Astrocyte of the cerebellum (primary cell): ENCODE measurements at regions of chr3 and their contacts with region 1.

Region 1: GRCh38 chr3:124768812-124769211 is 38.6 kb downstream of the UMPS start:
- DNase-seq: no peak
- H3K4me3 ChIP-seq: no peak overlapping the region
- CTCF ChIP-seq: peak; percentile 23

Region 2: GRCh38 chr3:124520970-124521369 is 247.8 kb before region 1 on chr3:
- in situ Hi-C with region 1: no loop called
- DNase-seq: no peak
- H3K4me3 ChIP-seq: no peak overlapping the region
- CTCF ChIP-seq: no peak

Region 3: DNA sequence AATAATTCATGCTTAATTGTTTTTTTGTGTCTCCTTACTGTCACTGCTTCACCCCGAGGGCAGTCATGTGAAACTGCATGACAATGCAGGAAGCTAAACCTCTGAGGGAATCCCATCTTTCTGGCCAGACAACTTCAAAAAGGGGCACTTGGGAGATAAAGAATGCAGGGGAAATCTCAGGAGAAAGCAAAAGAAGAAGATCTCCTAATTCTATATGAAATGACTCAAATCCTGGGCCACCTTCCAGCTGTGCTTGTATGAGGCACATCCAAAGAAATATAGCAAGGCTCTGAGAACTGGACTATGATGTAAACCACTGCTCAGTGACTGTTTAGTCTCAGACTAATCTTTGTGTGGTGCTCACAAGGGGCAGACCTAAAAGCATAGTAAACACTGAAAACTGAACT is 61.2 kb before region 1 on chr3:
- in situ Hi-C with region 1: no loop called
- DNase-seq: peak; percentile 59
- H3K4me3 ChIP-seq: no peak overlapping the region
- CTCF ChIP-seq: no peak

Region 4: DNA sequence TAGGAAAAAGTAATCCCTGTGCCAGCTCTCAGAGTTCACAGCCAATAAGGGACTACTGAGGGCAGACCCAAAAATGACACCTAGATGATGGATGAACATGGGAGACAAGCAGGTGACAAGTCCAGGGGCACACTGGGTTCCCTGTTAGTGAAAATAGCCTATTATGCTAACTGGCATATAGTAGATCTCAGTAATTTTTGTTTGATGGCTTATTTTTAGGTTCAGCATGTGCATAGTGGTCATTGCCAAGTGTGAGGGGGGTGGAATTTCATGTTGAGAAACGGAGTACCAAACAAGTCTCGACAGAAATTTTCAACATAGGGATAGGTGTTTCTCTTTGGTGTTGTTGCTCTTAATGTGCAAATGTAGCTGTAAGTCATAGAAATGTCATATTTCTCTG is 124.7 kb after region 1 on chr3:
- in situ Hi-C with region 1: loop called (anchors 5 kb)
- DNase-seq: no peak
- H3K4me3 ChIP-seq: no peak overlapping the region
- CTCF ChIP-seq: no peak